Esophagus muscularis mucosa (tissue), 4 donors: ENCODE measurements at regions of chrX and their contacts with region 1.

Region 1: GRCh38 chrX:101206471-101206870 is 13.1 kb upstream of the DRP2 start:
- DNase-seq: no peak
- H3K4me3 ChIP-seq: no peak overlapping the region
- H3K27ac ChIP-seq: no peak overlapping the region
- H3K4me1 ChIP-seq: peaks cover 0 to 17% (median 3%) of the 10 kb centered on the region in 4 donors
- H3K27me3 ChIP-seq: no peaks in the 10 kb centered on the region
- CTCF ChIP-seq: peak; percentile 23 to 51 (median 41)
- EP300 ChIP-seq: no peak
- POLR2A ChIP-seq: no peak

Region 2: DNA sequence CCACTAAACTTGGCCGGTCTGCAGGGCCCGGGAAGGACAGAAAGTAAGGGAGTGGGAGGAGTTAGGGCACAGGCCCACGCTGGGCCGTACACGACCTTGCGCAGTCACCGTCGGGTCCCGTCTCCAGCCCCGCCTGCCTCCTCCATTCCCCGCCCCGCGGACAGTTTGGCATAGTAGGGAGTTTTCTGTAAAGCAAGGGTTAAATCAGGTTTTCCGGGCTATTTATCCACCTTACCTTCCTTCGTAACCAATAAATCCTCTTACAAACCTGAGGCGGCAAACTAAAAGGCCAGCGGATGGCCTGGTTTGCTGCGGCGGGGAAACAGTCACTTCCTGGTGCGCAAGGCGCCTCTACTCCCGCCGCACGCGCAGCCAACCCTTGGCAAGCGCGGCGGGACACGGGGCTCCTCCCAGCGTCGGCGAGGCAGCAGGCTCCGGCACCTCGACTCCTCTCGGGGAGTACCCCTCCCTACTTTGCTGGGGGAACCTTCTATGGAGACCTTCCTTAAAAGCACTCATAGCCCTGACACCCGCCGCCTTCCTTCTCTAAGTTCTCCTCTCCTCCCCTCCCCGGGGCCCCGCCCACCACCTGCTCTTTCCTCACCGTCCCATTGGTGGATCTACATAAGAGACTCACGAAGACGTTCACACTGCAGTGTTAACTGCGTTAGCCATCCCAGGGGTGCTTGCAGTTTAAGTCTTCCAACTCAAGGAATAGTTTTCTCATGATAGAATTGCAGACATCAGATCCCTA is 154.7 kb before region 1 on chrX and contains the start of gene TRMT2B:
- intact Hi-C with region 1: loop called (anchors 10 kb)
- DNase-seq: peak; percentile 95
- H3K4me3 ChIP-seq: peak within 1 kb of the TSS; percentile 58 to 66 (median 64)
- H3K27ac ChIP-seq: peak within 1 kb of the TSS; percentile 81 to 91 (median 87)
- H3K4me1 ChIP-seq: peaks cover 0 to 21% (median 11%) of the 10 kb centered on the region in 4 donors
- H3K27me3 ChIP-seq: no peaks in the 10 kb centered on the region
- CTCF ChIP-seq: no peak
- EP300 ChIP-seq: no peak
- POLR2A ChIP-seq: no peak
- total RNA-seq, gene TRMT2B: 11.1 to 15.9 (median 15.7) TPM

Region 3: GRCh38 chrX:101450961-101451360 is 244.5 kb after region 1 on chrX:
- intact Hi-C with region 1: no loop called
- DNase-seq: no peak
- H3K4me3 ChIP-seq: no peak overlapping the region
- H3K27ac ChIP-seq: no peak overlapping the region
- H3K4me1 ChIP-seq: peaks cover 0 to 4% (median 0%) of the 10 kb centered on the region in 4 donors
- H3K27me3 ChIP-seq: no peaks in the 10 kb centered on the region
- CTCF ChIP-seq: no peak
- EP300 ChIP-seq: no peak
- POLR2A ChIP-seq: no peak